Gastrocnemius medialis (tissue), 4 donors: ENCODE measurements at regions of chr3 and their contacts with region 1.

Region 1: DNA sequence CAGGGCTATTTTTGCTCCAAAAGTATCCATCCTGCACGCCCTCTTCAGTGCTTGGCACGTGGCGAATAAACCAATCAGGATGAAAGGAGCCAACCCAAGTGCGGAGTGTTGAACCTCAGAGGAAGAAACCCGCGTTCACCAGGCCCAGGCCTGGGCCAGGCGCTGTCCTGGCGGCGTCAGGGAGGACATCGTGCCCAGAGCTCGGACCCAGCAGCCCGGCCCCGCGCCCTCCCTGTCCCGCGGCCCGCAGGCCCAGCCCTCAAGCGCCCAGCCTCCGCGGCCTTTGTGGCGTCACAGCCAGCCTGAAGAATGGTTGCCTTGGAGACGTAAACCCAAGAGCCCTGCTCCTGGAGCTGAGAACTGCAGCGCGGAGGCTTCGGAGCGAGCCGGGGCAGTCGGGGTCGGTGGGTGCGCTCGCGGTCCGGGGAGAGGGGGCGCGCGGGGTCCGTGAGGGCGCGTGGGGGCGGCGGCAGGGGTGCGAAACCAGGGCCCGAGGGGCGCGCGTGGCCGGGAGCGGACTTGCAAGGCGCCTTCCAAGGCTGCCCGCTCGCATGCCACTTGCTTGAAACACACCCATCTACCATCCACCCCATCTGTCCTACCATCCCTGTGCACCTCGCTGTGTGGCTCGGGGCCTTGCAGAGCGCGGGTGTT is at the start of gene CFAP100:
- DNase-seq: no peak
- ATAC-seq: peak in 1 of 2 donors; percentile 31
- H3K4me3 ChIP-seq: peak within 1 kb of the TSS; percentile 15 to 41 (median 26)
- H3K27ac ChIP-seq: no peak within 1 kb of the TSS
- H3K4me1 ChIP-seq: peaks cover 3 to 5% of the 10 kb centered on the region in 2 donors
- H3K27me3 ChIP-seq: peaks cover 0 to 7% (median 3%) of the 10 kb centered on the region in 3 donors
- CTCF ChIP-seq: no peak
- POLR2A ChIP-seq: no peak
- total RNA-seq, gene CFAP100: not detected

Region 2: DNA sequence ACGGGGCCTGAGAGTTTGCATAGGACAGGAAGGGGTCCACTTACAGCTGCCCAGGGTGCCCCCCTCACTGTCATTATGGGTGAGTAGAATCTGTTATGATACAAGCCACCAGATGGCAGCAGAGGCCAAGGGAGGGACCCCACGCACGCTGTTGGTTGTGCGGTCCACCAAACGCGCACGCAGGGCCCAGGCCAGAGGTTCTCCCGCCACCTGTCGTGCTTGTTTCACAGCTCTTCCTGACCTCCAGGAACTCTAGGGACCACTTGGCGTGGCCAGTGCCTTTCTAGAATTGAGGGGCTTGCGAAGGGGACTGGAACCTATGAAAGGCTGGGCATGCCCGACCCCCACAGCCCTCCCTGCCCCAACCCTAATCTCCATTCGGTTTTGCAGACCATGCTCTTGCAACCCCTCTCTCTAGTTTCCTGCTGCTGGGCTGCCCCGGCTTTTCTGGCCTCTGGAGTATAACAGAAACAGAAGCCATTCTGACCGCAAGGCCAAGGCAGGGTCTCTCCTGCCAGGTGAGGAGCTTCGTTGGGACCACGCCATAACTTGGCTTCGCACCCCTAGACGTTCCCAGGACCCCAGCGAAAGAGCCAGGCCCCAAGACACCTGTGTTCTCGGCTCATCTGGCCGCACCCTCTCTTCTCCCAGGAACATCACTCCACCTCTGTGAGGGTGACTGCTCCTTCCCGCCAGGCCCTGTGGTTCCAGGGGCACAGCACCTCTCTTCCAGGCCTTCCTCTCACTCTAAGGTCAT is 260.3 kb before region 1 on chr3:
- in situ Hi-C with region 1: loop called in 2 of 4 experiments (anchors 5 to 25 kb)
- intact Hi-C with region 1: loop called (anchors 1 kb)
- DNase-seq: peak; percentile 25 to 73
- ATAC-seq: peak; percentile 80 to 93
- H3K4me3 ChIP-seq: no peak overlapping the region
- H3K27ac ChIP-seq: peak overlapping the region in 2 of 4 donors; percentile 12 to 14
- H3K4me1 ChIP-seq: no peaks in the 10 kb centered on the region
- H3K27me3 ChIP-seq: no peaks in the 10 kb centered on the region
- CTCF ChIP-seq: peak; percentile 87 to 96 (median 91)
- POLR2A ChIP-seq: no peak

Region 3: GRCh38 chr3:126146525-126147146 is 248.1 kb before region 1 on chr3:
- in situ Hi-C with region 1: loop called in 3 of 4 experiments (anchors 10 to 25 kb)
- intact Hi-C with region 1: no loop called
- DNase-seq: no peak
- ATAC-seq: no peak
- H3K4me3 ChIP-seq: no peak overlapping the region
- H3K27ac ChIP-seq: no peak overlapping the region
- H3K4me1 ChIP-seq: no peaks in the 10 kb centered on the region
- H3K27me3 ChIP-seq: no peaks in the 10 kb centered on the region
- CTCF ChIP-seq: no peak
- POLR2A ChIP-seq: no peak

Region 4: GRCh38 chr3:126212602-126213378 is 181.9 kb before region 1 on chr3:
- in situ Hi-C with region 1: no loop called
- intact Hi-C with region 1: no loop called
- DNase-seq: peak in 1 of 2 donors; percentile 36
- ATAC-seq: peak; percentile 78 to 79
- H3K4me3 ChIP-seq: peak overlapping the region; percentile 54 to 84 (median 62)
- H3K27ac ChIP-seq: peak overlapping the region; percentile 8 to 60 (median 36)
- H3K4me1 ChIP-seq: peaks cover 16 to 19% of the 10 kb centered on the region in 2 donors
- H3K27me3 ChIP-seq: peaks cover 0 to 11% (median 0%) of the 10 kb centered on the region in 3 donors
- CTCF ChIP-seq: peak in 4 of 5 experiments; percentile 43 to 71 (median 48)
- POLR2A ChIP-seq: no peak

Region 5: GRCh38 chr3:126245811-126246727 is 148.6 kb before region 1 on chr3:
- in situ Hi-C with region 1: loop called (anchors 5 to 10 kb)
- intact Hi-C with region 1: loop called (anchors 1 kb)
- DNase-seq: peak; percentile 53 to 69
- ATAC-seq: peak; percentile 93 to 95
- H3K4me3 ChIP-seq: no peak overlapping the region
- H3K27ac ChIP-seq: peak overlapping the region in 3 of 4 donors; percentile 4 to 46 (median 19)
- H3K4me1 ChIP-seq: peaks cover 0 to 4% of the 10 kb centered on the region in 2 donors
- H3K27me3 ChIP-seq: no peaks in the 10 kb centered on the region
- CTCF ChIP-seq: peak in 4 of 5 experiments; percentile 41 to 63 (median 53)
- POLR2A ChIP-seq: no peak

Region 6: DNA sequence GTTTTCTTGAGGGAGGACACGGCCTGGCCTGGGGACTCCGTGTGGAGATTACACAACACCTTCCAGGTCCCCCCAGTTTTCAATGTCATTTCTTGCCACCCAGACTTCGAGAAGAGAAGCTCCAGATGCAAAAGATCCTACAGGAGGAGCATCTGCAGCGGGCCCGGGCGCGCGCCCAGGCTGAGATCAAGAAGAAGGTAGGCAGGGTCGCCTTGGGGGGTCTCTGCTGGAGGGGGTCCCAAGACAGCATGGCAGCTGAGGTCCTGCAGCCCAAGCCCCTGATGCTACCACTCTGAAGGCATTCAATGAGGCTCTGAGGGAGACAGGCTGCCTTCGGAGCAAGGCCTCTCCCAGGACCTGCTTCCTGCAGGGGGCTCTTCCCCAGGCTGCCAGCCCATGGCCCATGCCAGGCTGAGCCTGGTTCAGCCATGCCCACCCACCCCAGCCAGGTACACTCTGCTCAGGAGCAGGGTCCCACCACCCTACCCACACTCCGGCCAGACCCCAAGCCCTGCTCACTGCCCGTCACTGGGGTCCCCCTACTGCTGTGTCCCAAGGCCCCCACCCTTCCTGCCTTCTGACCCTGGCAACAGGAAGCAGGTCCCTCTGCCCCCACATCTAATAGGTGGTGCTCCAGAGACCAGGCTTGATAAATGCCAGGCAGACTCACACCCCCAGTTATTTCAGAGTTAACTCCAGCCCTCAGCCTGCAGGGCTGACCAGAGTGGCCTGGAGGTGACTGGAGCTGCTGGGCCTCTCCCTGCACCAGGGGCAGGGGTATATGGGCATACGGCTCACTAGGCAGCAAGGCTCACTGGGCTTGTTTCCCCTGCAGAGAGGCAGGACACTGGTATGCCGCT is 41.0 kb after region 1 on chr3:
- in situ Hi-C with region 1: no loop called
- intact Hi-C with region 1: loop called (anchors 1 kb)
- DNase-seq: no peak
- ATAC-seq: no peak
- H3K4me3 ChIP-seq: no peak overlapping the region
- H3K27ac ChIP-seq: no peak overlapping the region
- H3K4me1 ChIP-seq: peaks cover 11 to 28% of the 10 kb centered on the region in 2 donors
- H3K27me3 ChIP-seq: no peaks in the 10 kb centered on the region
- CTCF ChIP-seq: no peak
- POLR2A ChIP-seq: no peak

Region 7: DNA sequence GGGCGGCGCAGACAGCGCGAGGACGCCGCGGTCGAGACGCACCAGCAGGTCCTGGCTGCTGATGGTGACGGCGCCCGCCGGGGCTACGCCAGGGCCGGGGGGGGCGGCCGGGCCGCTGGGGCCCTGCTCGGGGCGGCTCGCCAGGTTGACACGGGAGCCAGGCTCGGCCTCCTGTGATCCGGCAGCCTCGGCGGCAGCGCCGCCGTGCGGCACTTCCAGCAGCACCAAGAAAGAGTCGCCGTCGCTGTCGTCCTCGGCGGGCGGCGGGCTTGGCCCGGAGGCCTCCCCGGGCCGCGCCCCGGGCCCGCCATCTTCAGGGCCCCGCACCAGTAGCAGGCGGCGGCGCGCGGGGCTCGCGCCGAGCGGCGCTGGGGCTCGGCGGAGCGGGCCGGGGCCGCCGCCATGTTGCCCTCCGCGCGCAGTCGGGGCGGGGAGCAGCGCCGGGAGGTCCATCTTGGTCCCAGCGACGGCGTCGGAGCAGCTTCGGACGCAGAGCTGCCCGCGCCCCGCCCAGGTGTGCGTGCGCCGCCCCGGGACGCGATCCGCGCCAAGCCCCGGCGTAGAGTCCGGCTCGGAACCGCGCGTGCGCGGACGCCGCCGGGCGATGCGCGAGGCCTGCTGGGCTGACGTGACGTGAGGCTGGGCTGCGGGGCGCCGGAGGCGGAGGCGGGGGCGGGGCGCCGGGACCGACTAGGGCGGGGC is 80.9 kb after region 1 on chr3 and contains the start of gene ZXDC:
- in situ Hi-C with region 1: loop called in 2 of 4 experiments (anchors 10 kb)
- intact Hi-C with region 1: loop called (anchors 2 kb)
- DNase-seq: peak; percentile 88 to 94
- ATAC-seq: peak; percentile 64 to 67
- H3K4me3 ChIP-seq: peak within 1 kb of the TSS; percentile 70 to 93 (median 72)
- H3K27ac ChIP-seq: peak within 1 kb of the TSS; percentile 95 to 97 (median 96)
- H3K4me1 ChIP-seq: peaks cover 41 to 46% of the 10 kb centered on the region in 2 donors
- H3K27me3 ChIP-seq: no peaks in the 10 kb centered on the region
- CTCF ChIP-seq: peak; percentile 18 to 68 (median 67)
- POLR2A ChIP-seq: peak; percentile 93 to 95
- total RNA-seq, gene ZXDC: 40.9 to 54.2 (median 45.4) TPM